ENCODE measurements at regions of chr5 and their contacts with region 1.

Region 1: GRCh38 chr5:172777881-172778814 is 7.2 kb upstream of the DUSP1 start:
- DNase-seq: peak; percentile 80
- H3K4me3 ChIP-seq: no peak overlapping the region
- H3K27ac ChIP-seq: peak overlapping the region; percentile 73 to 99 (median 98)
- H3K4me1 ChIP-seq: peaks cover 0 to 44% (median 25%) of the 10 kb centered on the region in 4 donors
- H3K27me3 ChIP-seq: no peaks in the 10 kb centered on the region
- CTCF ChIP-seq: no peak
- EP300 ChIP-seq: no peak
- POLR2A ChIP-seq: no peak

Region 2: GRCh38 chr5:172833686-172834414 is 55.7 kb after region 1 on chr5 and contains the start of gene ERGIC1:
- intact Hi-C with region 1: loop called (anchors 2 kb)
- DNase-seq: peak; percentile 92
- H3K4me3 ChIP-seq: peak within 1 kb of the TSS; percentile 87 to 96 (median 94)
- H3K27ac ChIP-seq: peak within 1 kb of the TSS; percentile 86 to 96 (median 92)
- H3K4me1 ChIP-seq: peaks cover 0 to 47% (median 42%) of the 10 kb centered on the region in 4 donors
- H3K27me3 ChIP-seq: no peaks in the 10 kb centered on the region
- CTCF ChIP-seq: no peak
- EP300 ChIP-seq: no peak
- POLR2A ChIP-seq: peak; percentile 43 to 50
- total RNA-seq, gene ERGIC1: 80.6 to 117 (median 95.7) TPM